ENCODE measurements at regions of chr4 and their contacts with region 1.

Region 1: DNA sequence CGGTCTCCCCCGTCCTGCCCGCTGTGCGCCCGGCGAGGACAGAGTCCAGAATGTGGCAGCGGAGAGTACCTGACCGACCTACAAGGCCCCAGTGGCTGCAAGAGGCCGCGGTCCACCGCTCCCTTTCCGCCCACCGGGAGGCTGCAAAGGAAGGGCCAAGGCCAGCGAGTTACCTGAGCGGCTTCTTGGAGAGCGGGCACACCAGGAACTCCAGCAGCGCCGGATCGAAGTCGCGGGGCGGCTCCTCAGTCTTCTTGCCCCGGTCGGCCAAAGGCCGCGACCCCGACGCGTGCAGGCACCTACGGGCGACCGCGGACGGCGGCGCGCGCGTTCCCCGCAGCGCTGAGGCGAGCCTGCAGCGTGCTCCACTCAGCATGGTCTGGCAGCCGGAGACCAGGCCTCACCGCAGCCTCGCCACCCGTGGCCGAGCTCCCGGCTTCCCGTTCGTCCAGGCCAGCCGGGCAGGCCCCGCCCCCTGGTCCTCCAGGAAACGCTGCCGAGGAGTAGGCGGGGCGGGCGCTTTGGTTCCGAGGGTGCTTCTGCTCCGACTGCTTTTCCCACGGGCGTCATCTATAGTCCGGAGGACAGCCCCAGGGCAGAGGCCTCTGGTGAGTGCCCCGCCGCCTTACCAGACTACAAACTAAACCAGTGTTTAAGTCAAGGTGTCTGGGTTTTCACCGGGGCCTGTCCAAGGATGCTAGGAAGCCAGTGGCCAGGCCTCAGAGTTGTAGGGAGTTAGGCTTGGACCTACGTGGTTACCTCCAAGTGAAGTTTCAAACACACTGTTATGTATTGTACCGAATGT is at the start of gene PYURF:
- ATAC-seq: peak; percentile 82 to 98 (median 96)
- H3K4me3 ChIP-seq: peak within 1 kb of the TSS; percentile 67 to 91 (median 88)
- H3K27ac ChIP-seq: peak within 1 kb of the TSS; percentile 84 to 90
- H3K4me1 ChIP-seq: peaks cover 0 to 12% of the 10 kb centered on the region in 2 donors
- total RNA-seq, gene PYURF: 48.4 to 95.5 (median 68.7) TPM

Region 2: DNA sequence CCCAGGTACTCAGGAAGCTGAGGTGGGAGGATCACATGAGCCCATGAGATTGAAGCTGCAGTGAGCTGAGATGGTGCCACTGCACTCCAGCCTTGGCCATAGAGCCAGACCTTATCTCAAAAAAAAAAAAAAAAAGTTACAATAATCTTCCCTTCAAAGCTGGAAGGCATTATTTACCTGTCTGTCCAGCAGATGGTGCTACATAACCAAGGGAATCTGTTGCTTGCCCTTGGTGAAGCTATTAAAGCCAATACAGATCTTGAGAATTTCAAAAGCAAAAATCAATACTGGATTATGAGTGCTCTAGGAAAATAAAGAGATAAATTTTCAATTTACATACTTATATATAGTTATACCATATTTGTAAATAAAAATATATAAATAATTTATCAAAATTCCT is 490.2 kb before region 1 on chr4:
- in situ Hi-C with region 1: loop called in 4 of 9 experiments (anchors 25 kb)
- ATAC-seq: peak in 4 of 8 experiments; percentile 49 to 66 (median 54)
- H3K4me3 ChIP-seq: no peak overlapping the region
- H3K27ac ChIP-seq: no peak overlapping the region
- H3K4me1 ChIP-seq: no peaks in the 10 kb centered on the region

Region 3: DNA sequence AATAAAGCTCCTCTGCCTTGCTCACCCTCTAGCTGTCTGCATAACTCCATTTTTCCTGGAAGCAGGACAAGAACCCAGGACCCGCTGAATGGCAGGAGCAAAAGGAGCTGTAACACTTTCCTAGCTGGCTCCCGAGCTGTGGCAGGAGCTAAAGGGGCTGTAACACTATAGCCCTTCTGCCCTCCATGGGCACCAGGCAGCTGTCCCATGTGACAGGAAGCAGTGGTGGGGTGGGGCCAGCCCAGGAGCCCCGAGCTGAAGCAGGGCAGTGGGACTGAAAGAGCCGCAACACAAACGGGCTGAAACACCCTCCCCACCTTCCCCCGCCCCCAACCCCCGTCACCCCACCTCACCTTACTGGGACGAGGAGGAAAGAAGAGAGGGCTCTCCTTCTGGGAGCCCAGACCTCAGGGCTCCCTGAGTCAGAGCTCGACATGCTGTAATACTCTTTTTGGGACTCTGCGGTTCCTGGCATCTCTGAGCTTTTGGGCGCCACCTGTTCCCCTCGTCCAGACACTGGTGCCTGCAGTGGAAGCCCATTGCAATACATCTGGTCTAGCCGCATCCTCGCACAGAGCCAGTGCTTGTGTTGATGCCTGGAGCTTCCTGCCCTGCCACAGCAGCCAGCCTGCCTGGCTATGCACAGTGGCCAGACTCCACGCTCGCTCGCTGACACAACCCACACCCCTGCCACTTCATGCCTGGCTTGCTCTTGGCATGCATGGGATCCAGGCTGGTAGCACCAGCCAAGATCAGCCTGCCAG is 278.5 kb before region 1 on chr4:
- in situ Hi-C with region 1: loop called in 1 of 9 experiments (anchors 25 kb)
- ATAC-seq: no peak
- H3K4me3 ChIP-seq: no peak overlapping the region
- H3K27ac ChIP-seq: no peak overlapping the region
- H3K4me1 ChIP-seq: no peaks in the 10 kb centered on the region

Region 4: DNA sequence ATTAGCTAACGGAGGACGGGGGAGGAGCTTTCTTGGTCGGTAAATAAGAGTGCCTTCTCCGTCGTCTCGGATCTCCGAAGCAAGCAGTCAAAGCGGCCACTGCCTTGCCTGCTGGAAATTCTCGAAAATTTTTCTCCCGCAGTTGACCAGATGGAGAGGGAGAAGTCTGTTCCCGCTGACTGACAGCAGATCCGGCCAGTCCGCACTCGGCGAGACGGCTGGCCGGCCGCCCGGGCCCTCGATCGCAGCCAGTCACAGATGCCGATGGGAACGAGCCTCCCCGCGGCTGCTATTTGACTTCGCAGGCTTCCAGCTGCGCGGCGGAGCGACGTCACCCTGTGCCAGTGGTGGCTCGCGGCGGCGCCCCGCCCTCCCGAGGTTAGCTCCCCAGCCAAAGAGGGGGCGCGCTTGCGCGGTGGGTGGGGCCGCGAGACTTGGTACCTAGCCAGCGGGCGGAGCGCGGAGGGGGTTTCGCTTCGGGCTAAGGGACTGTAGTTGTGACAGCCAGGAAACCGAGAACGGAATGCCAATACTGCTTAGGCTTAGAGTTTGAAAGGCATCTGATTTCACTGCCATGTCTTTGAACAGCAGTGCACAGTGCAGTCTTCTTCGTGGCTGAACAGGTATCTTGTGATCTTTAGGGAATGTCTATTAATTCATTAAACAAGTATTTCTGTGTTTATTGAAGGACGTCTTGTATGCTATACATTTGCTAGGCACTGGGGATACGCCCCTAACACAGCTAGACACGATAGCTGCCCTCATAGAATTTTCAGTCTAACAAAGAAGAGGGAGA is 238.9 kb before region 1 on chr4 and contains the start of gene PPM1K:
- in situ Hi-C with region 1: no loop called
- ATAC-seq: peak; percentile 86 to 95 (median 94)
- H3K4me3 ChIP-seq: peak within 1 kb of the TSS; percentile 50 to 68 (median 56)
- H3K27ac ChIP-seq: peak within 1 kb of the TSS; percentile 83 to 88
- H3K4me1 ChIP-seq: peaks cover 6 to 15% of the 10 kb centered on the region in 2 donors
- total RNA-seq, gene PPM1K: 14.6 to 46.3 (median 32.4) TPM

Region 5: GRCh38 chr4:88643932-88644331 is 120.4 kb after region 1 on chr4:
- in situ Hi-C with region 1: no loop called
- ATAC-seq: no peak
- H3K4me3 ChIP-seq: no peak overlapping the region
- H3K27ac ChIP-seq: no peak overlapping the region
- H3K4me1 ChIP-seq: no peaks in the 10 kb centered on the region

Region 6: DNA sequence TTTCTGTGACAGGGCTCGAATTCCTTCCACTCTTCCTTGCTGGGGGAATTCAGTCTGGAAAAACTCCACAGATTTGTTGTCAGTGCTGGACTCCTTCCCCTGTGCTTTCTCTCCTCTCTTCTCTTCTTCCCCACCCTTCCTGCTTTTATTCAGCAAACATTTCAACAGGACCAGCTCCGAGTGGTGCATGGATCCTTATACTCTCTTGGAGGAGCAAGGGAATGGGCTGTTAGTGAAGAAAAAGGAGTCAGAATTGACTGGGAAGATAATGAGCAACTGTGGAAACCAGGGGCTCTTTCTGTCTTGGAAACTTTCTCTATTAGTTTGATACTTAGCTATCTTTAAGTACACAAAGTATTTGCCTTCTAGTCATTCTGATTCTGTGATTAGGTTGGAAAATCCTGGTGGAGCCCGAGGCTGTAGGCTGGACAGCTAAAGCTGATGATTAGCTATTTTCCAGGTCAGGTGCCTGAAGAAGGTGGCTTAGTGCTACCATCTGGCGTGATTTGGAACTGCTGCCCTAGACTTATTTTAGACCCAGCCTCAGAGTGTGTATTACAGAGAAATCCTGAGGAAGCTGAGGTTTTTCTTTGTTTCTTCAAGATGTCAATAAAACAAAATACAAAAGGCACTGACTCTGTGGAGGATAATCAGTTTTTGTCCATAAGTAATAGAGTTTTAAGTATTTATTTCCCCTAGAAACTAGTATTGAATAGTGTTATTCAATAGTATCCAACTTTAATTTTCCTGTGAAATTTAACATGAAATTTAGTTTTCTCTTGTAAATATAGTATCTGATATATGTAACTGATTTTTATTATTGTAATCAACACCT is 135.7 kb after region 1 on chr4:
- in situ Hi-C with region 1: loop called in 1 of 9 experiments (anchors 25 kb)
- ATAC-seq: peak in 5 of 8 experiments; percentile 51 to 100 (median 96)
- H3K4me3 ChIP-seq: no peak overlapping the region
- H3K27ac ChIP-seq: no peak overlapping the region
- H3K4me1 ChIP-seq: no peaks in the 10 kb centered on the region

Region 7: GRCh38 chr4:89029591-89029990 is 506.1 kb after region 1 on chr4:
- in situ Hi-C with region 1: loop called in 4 of 9 experiments (anchors 25 kb)
- ATAC-seq: no peak
- H3K4me3 ChIP-seq: no peak overlapping the region
- H3K27ac ChIP-seq: no peak overlapping the region
- H3K4me1 ChIP-seq: no peaks in the 10 kb centered on the region